ENCODE measurements at regions of chr21 and their contacts with region 1.

Region 1: GRCh38 chr21:46144464-46145070 is 10.8 kb downstream of the FTCD start:
- DNase-seq: peak; percentile 42
- ATAC-seq: no peak

Region 2: GRCh38 chr21:46253610-46254124 is 109.1 kb after region 1 on chr21:
- intact Hi-C with region 1: loop called (anchors 1 kb)
- DNase-seq: no peak
- ATAC-seq: no peak